Upper lobe of right lung (tissue), 1 donor: ENCODE measurements at regions of chr14 and their contacts with region 1.

Region 1: DNA sequence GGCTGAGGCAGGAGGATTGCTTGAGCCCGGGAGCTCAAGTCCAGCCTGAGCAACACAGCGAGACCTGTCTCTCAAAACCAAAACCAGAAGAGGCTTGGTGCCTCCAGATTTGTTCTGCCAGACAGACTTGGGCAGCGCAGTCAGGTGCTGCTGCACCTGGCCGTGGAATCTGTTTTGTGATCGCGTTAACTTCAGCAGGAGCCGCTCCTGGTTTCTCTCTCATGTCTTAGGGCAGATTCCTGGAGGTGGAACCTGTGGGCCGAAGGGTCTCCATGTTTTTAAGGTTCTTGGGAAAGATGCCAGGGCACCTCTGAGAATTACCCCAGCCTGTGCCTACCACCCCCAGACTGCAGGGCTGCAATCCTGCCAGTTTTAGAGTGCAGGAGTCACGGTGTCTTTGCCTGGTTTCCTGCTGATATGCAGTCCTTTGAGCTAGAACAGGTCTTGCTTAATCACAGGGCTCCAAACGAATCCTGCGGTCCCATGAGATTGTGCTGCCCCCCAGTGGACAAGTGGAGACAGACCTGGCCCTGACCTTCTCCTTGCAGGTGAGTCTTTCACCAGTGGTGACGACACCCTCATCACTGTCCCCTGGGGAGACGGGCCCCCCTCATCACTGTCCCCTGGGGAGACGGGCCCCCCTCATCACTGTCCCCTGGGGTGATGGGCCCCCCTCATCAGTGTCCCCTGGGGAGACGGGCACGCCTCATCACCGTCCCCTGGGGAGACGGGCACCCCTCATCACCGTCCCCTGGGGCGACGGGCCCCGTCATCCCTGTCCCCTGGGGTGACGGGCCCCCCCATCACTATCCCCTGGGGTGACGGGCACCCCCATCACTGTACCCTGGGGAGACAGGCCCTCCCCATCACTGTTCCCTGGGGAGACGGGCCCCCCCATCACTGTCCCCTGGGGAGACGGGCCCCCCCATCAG is 37.6 kb downstream of the PACS2 start:
- DNase-seq: peak; percentile 90
- ATAC-seq: peak; percentile 96
- H3K4me3 ChIP-seq: no peak overlapping the region
- H3K27ac ChIP-seq: no peak overlapping the region
- H3K4me1 ChIP-seq: peaks cover 5% of the 10 kb centered on the region
- H3K27me3 ChIP-seq: no peaks in the 10 kb centered on the region
- CTCF ChIP-seq: peak; percentile 86

Region 2: DNA sequence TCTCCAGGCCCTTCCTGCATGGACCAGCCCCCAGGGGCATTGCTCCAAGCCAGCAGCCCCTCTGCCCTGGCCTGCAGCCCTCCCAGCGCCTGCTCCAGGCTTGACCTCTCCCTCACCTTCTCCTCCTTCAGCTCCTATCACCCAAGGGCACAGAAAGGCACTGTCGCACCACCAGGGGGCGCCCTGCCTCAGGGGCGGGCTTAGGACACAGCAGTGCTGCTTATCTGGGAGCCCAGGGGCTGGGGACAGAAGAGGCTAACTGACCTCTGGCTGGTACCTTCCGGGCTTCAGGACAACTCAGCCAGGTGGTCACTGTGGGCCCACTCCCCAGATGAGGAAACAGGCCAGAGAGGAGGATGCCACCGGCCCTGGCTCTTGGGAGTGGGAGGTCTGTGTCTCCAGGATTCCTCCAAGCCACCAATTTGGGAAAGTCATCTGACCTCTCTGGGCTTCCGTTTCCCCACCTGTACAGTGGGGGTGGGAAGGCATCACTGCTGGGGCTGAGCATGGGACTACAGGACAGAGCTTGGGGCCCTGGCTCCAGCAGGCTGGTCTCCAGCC is 261.6 kb before region 1 on chr14:
- intact Hi-C with region 1: loop called (anchors 10 kb)
- DNase-seq: peak; percentile 95
- ATAC-seq: peak; percentile 52
- H3K4me3 ChIP-seq: no peak overlapping the region
- H3K27ac ChIP-seq: peak overlapping the region; percentile 87
- H3K4me1 ChIP-seq: peaks cover 54% of the 10 kb centered on the region
- H3K27me3 ChIP-seq: no peaks in the 10 kb centered on the region
- CTCF ChIP-seq: peak; percentile 98